Right lobe of liver (tissue), 6 donors: ENCODE measurements at regions of chr1 and their contacts with region 1.

Region 1: GRCh38 chr1:151934048-151934493 is 24.8 kb upstream of the THEM4 start:
- DNase-seq: no peak
- ATAC-seq: peak; percentile 94 to 96 (median 95)
- H3K4me3 ChIP-seq: no peak overlapping the region
- H3K27ac ChIP-seq: no peak overlapping the region
- H3K4me1 ChIP-seq: peaks cover 0 to 16% (median 0%) of the 10 kb centered on the region in 4 donors
- H3K27me3 ChIP-seq: no peaks in the 10 kb centered on the region
- CTCF ChIP-seq: peak; percentile 80 to 89 (median 84)
- POLR2A ChIP-seq: no peak

Region 2: DNA sequence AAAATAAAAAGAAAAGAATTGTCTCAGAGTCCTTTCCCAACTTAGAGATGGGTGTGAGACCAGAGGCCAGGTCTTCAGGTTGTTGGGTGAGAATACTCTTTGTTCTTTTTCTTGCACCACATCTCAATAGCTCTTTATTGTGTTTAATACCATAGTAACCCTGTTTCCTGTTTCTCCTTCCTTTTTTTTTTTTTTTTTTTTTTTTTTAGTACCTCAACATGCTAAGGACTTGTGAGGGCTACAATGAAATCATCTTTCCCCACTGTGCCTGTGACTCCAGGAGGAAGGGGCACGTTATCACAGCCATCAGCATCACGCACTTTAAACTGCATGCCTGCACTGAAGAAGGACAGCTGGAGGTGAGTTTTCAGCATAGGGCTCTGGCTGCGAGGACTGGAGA is 241.8 kb before region 1 on chr1:
- intact Hi-C with region 1: no loop called
- DNase-seq: no peak
- ATAC-seq: no peak
- H3K4me3 ChIP-seq: no peak overlapping the region
- H3K27ac ChIP-seq: no peak overlapping the region
- H3K4me1 ChIP-seq: peaks cover 0 to 10% (median 0%) of the 10 kb centered on the region in 4 donors
- H3K27me3 ChIP-seq: no peaks in the 10 kb centered on the region
- CTCF ChIP-seq: no peak
- POLR2A ChIP-seq: no peak

Region 3: GRCh38 chr1:151881456-151881855 is 52.6 kb before region 1 on chr1:
- intact Hi-C with region 1: no loop called
- DNase-seq: no peak
- ATAC-seq: no peak
- H3K4me3 ChIP-seq: no peak overlapping the region
- H3K27ac ChIP-seq: no peak overlapping the region
- H3K4me1 ChIP-seq: no peaks in the 10 kb centered on the region
- H3K27me3 ChIP-seq: no peaks in the 10 kb centered on the region
- CTCF ChIP-seq: peak in 1 of 4 donors; percentile 16
- POLR2A ChIP-seq: no peak

Region 4: DNA sequence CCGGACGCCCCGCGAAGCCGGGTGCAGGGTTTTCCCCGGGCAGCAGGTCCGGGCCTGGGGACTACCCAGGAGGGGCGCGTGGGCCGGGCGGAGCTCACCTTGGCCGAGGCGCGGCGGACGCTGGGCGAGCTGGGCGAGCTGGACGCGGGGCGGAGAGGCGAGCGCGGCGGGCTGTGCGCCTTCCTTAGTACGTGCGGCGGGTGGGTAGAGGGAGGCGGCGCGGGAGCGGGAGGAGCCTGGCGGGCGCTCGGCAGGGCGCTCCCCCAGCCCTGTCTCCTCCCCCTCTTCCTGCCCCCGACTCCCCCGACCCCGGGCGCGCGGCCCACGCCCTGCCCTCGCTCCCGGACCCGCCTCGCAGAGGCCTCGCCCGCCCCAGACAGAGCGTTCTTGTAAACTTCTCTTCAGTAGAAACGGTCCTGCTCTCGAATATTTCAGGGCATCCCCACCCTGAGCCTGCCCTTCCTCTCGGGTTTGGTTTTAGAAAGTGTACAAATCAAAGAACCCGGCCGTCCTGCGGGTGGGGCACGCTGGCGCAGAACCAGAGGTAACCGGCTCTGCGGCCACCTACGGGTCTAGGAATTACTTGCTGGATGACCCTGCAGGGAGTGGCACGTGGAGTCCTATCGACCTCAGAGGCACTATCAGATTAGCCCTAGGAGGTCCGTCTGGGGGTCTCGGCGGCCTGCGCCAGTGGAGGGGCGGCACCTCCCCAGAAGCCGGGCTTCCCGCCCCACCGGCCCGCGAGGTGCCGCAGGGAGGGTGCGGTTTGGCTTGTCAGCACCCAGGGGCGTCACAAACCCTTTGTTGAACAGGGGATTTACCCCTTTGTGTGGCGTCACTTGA is 59.8 kb after region 1 on chr1 and contains the start of gene S100A10:
- intact Hi-C with region 1: loop called in 1 of 2 experiments (anchors 10 kb)
- DNase-seq: peak; percentile 81 to 91 (median 88)
- ATAC-seq: peak; percentile 67 to 91 (median 82)
- H3K4me3 ChIP-seq: peak within 1 kb of the TSS; percentile 83 to 92 (median 85)
- H3K27ac ChIP-seq: peak within 1 kb of the TSS; percentile 83 to 96 (median 85)
- H3K4me1 ChIP-seq: peaks cover 0 to 43% (median 16%) of the 10 kb centered on the region in 4 donors
- H3K27me3 ChIP-seq: no peaks in the 10 kb centered on the region
- CTCF ChIP-seq: no peak
- POLR2A ChIP-seq: peak; percentile 92
- total RNA-seq, gene S100A10: 48.5 to 192 (median 61.7) TPM